ENCODE measurements at regions of chr12 and their contacts with region 1.

Region 1: GRCh38 chr12:46153268-46153872 is 115.5 kb downstream of the SLC38A1 start:
- DNase-seq: no peak
- ATAC-seq: no peak
- H3K4me3 ChIP-seq: no peak overlapping the region
- H3K27ac ChIP-seq: no peak overlapping the region
- H3K4me1 ChIP-seq: peaks cover 0 to 11% (median 0%) of the 10 kb centered on the region in 12 donors
- H3K27me3 ChIP-seq: no peaks in the 10 kb centered on the region
- CTCF ChIP-seq: peak; percentile 33 to 72 (median 57)
- POLR2A ChIP-seq: no peak

Region 2: DNA sequence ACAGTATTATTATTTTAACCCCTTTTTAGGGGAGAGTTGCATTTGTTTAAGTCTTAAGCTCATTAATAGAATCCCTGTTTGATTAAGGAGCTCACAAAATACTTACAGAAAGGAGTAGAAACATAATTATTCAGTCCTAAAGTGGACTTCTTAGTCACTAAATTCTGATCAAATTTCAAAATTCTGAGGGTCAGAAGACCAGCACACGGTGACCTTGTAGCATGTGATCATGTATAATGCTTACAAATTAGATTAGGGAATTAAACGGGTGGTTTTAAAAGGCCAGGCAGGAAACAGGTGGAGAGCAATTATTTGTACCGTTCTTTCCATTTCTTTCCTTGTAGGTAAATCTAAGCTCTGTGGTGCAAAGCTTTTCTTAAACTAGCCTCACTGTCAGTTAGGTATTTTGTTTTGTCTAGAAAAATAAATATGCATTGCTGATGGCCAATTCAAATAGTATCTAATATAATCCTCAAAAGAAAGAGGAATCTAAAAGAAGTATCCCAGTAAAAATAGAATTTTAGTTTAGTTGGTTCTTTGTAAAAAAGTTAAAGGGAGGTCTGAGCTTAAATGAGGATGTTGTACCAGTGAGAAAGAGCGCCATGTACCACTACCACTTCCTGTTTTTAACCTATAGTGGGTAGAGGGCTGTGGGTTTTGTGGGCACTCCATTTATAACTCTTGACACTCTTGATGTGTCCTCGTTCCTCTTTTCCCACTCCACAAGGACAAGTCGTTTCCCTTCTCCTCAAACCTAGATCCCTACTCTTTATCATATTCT is 64.4 kb after region 1 on chr12:
- intact Hi-C with region 1: no loop called
- DNase-seq: peak in 1 of 5 donors; percentile 34
- ATAC-seq: peak in 3 of 4 donors; percentile 37 to 63 (median 51)
- H3K4me3 ChIP-seq: no peak overlapping the region
- H3K27ac ChIP-seq: peak overlapping the region in 1 of 12 donors; percentile 77
- H3K4me1 ChIP-seq: peaks cover 0 to 85% (median 24%) of the 10 kb centered on the region in 12 donors
- H3K27me3 ChIP-seq: no peaks in the 10 kb centered on the region
- CTCF ChIP-seq: no peak
- POLR2A ChIP-seq: no peak

Region 3: DNA sequence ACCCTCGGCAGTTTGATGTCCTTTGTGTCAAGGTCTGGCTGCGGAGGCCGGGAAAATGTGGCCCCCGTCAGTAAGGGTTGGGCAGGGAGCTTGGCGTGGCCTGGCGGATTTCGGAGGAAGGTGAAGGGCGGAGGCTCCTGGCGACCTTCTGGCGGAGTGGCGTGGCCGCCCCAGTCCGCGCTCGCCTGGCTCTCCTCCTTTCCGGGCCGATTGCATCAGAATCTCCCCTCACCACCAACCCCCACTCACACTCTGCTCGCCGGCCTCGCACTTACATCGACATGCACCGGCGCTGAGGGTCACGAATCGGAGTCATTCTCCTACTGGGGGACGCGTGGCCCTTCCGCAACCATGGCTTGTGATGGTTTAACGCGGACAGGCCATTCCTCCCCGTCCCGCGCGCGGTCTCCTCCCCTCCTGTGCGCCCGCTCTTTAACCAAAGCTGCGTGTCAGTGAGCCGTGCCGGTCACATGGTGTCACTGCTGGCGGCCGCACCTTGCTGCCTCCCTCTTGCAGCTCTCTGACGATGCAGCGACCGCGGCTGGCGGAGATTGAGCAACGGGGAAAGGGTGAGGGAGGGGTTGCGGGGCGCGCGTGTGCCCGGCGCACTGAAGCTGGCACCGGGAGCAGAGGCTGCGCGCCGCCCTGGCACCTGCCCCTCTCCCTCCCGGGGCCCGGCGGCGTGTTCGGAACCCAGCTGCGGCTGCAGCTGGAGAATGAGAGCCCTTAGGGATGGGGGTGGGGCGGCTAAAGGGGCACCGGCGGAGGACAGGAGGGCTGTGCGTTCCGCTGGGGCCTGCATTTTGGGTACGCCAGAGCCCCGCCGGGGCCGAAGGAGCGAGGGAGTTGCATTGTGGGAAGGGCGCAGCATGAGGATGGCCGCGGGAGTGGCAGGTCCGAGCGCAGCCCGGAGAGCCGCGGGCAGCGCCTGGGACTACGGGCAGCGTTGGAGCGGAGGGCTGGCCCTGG is 115.5 kb after region 1 on chr12 and contains the start of gene SLC38A1:
- intact Hi-C with region 1: loop called in 1 of 10 experiments (anchors 10 kb)
- DNase-seq: peak; percentile 79 to 92 (median 89)
- ATAC-seq: peak; percentile 75 to 91 (median 86)
- H3K4me3 ChIP-seq: peak within 1 kb of the TSS; percentile 44 to 75 (median 64)
- H3K27ac ChIP-seq: peak within 1 kb of the TSS; percentile 47 to 91 (median 78)
- H3K4me1 ChIP-seq: peaks cover 0 to 59% (median 20%) of the 10 kb centered on the region in 12 donors
- H3K27me3 ChIP-seq: peaks cover 0 to 37% (median 0%) of the 10 kb centered on the region in 9 donors
- CTCF ChIP-seq: peak in 1 of 12 donors; percentile 7
- POLR2A ChIP-seq: peak; percentile 43 to 83
- total RNA-seq, gene SLC38A1: 98.4 to 248 (median 157) TPM

Region 4: GRCh38 chr12:46303039-46303666 is 149.8 kb after region 1 on chr12:
- intact Hi-C with region 1: loop called in 5 of 10 experiments (anchors 2 to 10 kb)
- DNase-seq: no peak
- ATAC-seq: peak in 3 of 4 donors; percentile 59 to 68 (median 62)
- H3K4me3 ChIP-seq: no peak overlapping the region
- H3K27ac ChIP-seq: no peak overlapping the region
- H3K4me1 ChIP-seq: peaks cover 0 to 31% (median 0%) of the 10 kb centered on the region in 12 donors
- H3K27me3 ChIP-seq: no peaks in the 10 kb centered on the region
- CTCF ChIP-seq: peak; percentile 42 to 67 (median 54)
- POLR2A ChIP-seq: no peak

Region 5: DNA sequence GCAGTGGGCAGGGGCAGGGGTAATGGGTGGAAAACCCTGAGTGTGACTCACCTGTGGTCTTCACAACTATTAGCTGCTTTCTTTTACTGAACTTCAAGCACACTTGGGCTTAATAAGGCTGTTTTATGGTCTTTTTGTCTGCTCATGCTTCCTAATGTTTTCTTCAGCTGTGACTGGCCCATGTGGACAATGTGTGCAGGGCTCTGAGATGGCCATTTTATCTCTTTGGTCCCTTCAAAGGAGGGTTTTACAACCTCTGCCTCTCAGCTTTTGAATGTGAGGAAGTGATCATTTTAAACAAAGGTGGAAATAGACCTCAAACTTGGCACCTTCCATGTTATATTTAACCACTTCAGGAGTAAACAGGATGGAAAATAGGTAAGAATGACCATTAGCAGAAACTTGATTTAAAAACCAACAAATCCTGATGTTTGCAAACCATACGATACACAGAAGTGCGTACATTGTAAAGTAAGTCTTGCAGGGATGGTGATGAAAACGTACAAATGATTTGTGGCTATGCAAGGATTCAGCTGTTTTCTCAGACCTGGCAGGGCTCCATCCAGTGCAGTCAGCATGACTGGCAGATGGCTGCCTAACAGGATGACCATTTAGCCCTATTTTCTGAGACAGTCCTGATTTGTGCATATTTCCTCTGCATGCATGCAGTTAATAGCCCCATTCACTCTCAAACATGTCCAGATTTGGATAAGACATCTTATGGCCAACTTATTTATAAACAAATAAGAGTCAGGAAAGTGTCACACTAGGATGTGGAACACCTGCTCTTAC is 569.2 kb after region 1 on chr12:
- intact Hi-C with region 1: no loop called
- DNase-seq: peak in 1 of 5 donors; percentile 27
- ATAC-seq: no peak
- H3K4me3 ChIP-seq: no peak overlapping the region
- H3K27ac ChIP-seq: no peak overlapping the region
- H3K4me1 ChIP-seq: peaks cover 0 to 10% (median 3%) of the 10 kb centered on the region in 12 donors
- H3K27me3 ChIP-seq: no peaks in the 10 kb centered on the region
- CTCF ChIP-seq: no peak
- POLR2A ChIP-seq: no peak

Measured in heart left ventricle (tissue), 16 donors.